ENCODE measurements at regions of chr6 and their contacts with region 1.

Region 1: DNA sequence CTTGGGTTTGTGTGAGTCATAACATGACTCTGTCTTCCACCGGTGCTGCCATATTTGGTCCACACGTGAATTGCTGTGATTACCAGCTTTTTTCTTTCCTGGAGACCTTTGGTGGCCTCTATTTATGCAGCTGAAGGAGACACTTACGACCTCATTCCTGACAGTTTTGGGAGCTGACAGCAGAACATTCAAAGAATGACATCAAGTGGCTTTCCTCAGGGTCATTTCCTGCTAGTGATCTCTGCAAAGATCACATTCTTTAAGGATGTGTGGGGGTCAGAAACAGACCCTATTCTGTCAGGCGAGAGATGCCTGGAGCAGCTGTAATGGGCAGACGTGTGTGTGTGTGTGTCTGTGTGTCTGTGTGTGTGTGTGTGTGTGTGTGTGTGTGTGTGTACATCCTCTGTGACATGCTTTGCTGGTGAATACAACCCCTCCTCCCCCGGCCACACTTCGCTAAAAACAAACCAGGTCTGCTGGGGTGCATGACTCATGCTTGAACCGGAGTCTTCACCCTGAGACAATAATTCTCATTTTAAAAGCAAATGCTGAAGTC is 115.6 kb downstream of the TMEM170B start:
- DNase-seq: peak; percentile 97
- ATAC-seq: peak; percentile 61
- H3K4me3 ChIP-seq: no peak overlapping the region
- H3K27ac ChIP-seq: peak overlapping the region; percentile 63
- H3K4me1 ChIP-seq: peaks cover 36% of the 10 kb centered on the region
- H3K27me3 ChIP-seq: no peaks in the 10 kb centered on the region
- CTCF ChIP-seq: no peak
- POLR2A ChIP-seq: no peak
- RAD21 ChIP-seq: no peak

Region 2: DNA sequence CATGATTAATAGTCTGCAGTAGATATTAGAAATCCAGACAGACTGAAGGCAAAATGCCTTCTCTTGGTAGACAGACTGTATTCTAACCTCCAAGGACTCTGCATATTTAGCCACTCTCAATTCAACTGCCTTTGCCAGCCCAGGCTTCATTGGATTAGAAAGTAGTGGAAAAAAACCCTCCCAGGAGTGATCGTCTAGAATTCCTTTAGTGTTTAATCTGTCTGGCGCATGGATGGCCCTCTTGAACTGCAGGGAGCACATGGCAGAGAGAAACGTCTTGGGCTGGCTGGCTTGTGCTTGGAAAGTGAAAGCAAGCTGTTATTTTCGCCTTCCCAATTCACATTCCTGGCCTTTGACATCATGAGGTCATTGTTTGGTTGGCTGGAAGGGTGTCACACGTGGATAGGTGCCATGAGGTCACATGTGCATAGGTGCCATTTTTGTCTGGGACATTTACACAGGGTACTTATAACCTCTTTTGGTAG is 389.8 kb before region 1 on chr6:
- CTCF ChIA-PET with region 1: no interaction called
- POLR2A ChIA-PET with region 1: no interaction called
- dilution Hi-C with region 1: no loop called
- in situ Hi-C with region 1: no loop called
- intact Hi-C with region 1: no loop called
- DNase-seq: peak; percentile 84
- ATAC-seq: peak; percentile 94
- H3K4me3 ChIP-seq: no peak overlapping the region
- H3K27ac ChIP-seq: peak overlapping the region; percentile 0; the same call in 1 of the 2 replicates
- H3K4me1 ChIP-seq: peaks cover 5% of the 10 kb centered on the region; the same call in 1 of the 2 replicates
- H3K27me3 ChIP-seq: no peaks in the 10 kb centered on the region
- CTCF ChIP-seq: no peak
- POLR2A ChIP-seq: no peak
- RAD21 ChIP-seq: no peak

Region 3: GRCh38 chr6:11618533-11618932 is 34.6 kb before region 1 on chr6:
- CTCF ChIA-PET with region 1: interaction called, 11 read pairs
- POLR2A ChIA-PET with region 1: interaction called, 3 read pairs
- dilution Hi-C with region 1: no loop called
- in situ Hi-C with region 1: loop called (anchors 5 kb)
- intact Hi-C with region 1: no loop called
- DNase-seq: peak; percentile 49
- ATAC-seq: no peak
- H3K4me3 ChIP-seq: no peak overlapping the region
- H3K27ac ChIP-seq: no peak overlapping the region
- H3K4me1 ChIP-seq: peaks cover 14% of the 10 kb centered on the region
- H3K27me3 ChIP-seq: no peaks in the 10 kb centered on the region
- CTCF ChIP-seq: peak; percentile 37
- POLR2A ChIP-seq: no peak
- RAD21 ChIP-seq: peak; percentile 48

Region 4: GRCh38 chr6:12011276-12012076 is 358.4 kb after region 1 on chr6:
- CTCF ChIA-PET with region 1: interaction called, 11 read pairs
- POLR2A ChIA-PET with region 1: no interaction called
- dilution Hi-C with region 1: no loop called
- in situ Hi-C with region 1: no loop called
- intact Hi-C with region 1: loop called (anchors 1 kb)
- DNase-seq: peak; percentile 96
- ATAC-seq: peak; percentile 72
- H3K4me3 ChIP-seq: peak overlapping the region; percentile 76
- H3K27ac ChIP-seq: peak overlapping the region; percentile 63; the same call in 1 of the 2 replicates
- H3K4me1 ChIP-seq: no peaks in the 10 kb centered on the region; the same call in 1 of the 2 replicates
- H3K27me3 ChIP-seq: no peaks in the 10 kb centered on the region
- CTCF ChIP-seq: no peak
- POLR2A ChIP-seq: peak; percentile 66
- RAD21 ChIP-seq: no peak

Region 5: DNA sequence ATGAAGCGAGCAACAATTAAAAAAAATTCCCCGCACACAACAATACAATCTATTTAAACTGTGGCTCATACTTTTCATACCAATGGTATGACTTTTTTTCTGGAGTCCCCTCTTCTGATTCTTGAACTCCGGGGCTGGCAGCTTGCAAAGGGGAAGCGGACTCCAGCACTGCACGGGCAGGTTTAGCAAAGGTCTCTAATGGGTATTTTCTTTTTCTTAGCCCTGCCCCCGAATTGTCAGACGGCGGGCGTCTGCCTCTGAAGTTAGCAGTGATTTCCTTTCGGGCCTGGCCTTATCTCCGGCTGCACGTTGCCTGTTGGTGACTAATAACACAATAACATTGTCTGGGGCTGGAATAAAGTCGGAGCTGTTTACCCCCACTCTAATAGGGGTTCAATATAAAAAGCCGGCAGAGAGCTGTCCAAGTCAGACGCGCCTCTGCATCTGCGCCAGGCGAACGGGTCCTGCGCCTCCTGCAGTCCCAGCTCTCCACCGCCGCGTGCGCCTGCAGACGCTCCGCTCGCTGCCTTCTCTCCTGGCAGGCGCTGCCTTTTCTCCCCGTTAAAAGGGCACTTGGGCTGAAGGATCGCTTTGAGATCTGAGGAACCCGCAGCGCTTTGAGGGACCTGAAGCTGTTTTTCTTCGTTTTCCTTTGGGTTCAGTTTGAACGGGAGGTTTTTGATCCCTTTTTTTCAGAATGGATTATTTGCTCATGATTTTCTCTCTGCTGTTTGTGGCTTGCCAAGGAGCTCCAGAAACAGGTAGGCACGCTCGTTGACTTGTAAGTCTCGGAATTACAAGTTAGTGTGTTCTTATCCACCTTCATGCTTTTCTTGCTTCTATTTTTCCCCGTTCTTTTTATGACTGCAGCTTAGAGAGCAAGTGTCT is 637.1 kb after region 1 on chr6 and contains the start of gene EDN1:
- CTCF ChIA-PET with region 1: interaction called, 15 read pairs
- POLR2A ChIA-PET with region 1: no interaction called
- dilution Hi-C with region 1: no loop called
- in situ Hi-C with region 1: no loop called
- intact Hi-C with region 1: loop called (anchors 1 kb)
- DNase-seq: peak; percentile 84
- ATAC-seq: peak; percentile 88
- H3K4me3 ChIP-seq: peak within 1 kb of the TSS; percentile 74
- H3K27ac ChIP-seq: peak within 1 kb of the TSS; percentile 83
- H3K4me1 ChIP-seq: peaks cover 12% of the 10 kb centered on the region
- H3K27me3 ChIP-seq: no peaks in the 10 kb centered on the region
- CTCF ChIP-seq: peak; percentile 45
- POLR2A ChIP-seq: peak; percentile 89
- RAD21 ChIP-seq: peak; percentile 52
- total RNA-seq, gene EDN1: 5.6 and 8.6 TPM in 2 replicates

Region 6: GRCh38 chr6:12605888-12606345 is 952.8 kb after region 1 on chr6:
- CTCF ChIA-PET with region 1: interaction called, 3 read pairs
- POLR2A ChIA-PET with region 1: no interaction called
- dilution Hi-C with region 1: no loop called
- in situ Hi-C with region 1: no loop called
- intact Hi-C with region 1: loop called (anchors 1 kb)
- DNase-seq: peak; percentile 75
- ATAC-seq: peak; percentile 77
- H3K4me3 ChIP-seq: no peak overlapping the region
- H3K27ac ChIP-seq: no peak overlapping the region
- H3K4me1 ChIP-seq: peaks cover 9% of the 10 kb centered on the region
- H3K27me3 ChIP-seq: no peaks in the 10 kb centered on the region
- CTCF ChIP-seq: peak; percentile 81
- POLR2A ChIP-seq: no peak
- RAD21 ChIP-seq: peak; percentile 88